Astrocyte of the cerebellum (primary cell): ENCODE measurements at regions of chr3 and their contacts with region 1.

Region 1: GRCh38 chr3:171187706-171188290 is 161.3 kb upstream of the SLC2A2 start:
- DNase-seq: no peak
- H3K4me3 ChIP-seq: no peak overlapping the region
- CTCF ChIP-seq: peak; percentile 74

Region 2: GRCh38 chr3:171223396-171223795 is 35.6 kb after region 1 on chr3:
- in situ Hi-C with region 1: loop called (anchors 5 kb)
- DNase-seq: no peak
- H3K4me3 ChIP-seq: no peak overlapping the region
- CTCF ChIP-seq: no peak

Region 3: GRCh38 chr3:171269542-171269941 is 81.7 kb after region 1 on chr3:
- in situ Hi-C with region 1: no loop called
- DNase-seq: no peak
- H3K4me3 ChIP-seq: no peak overlapping the region
- CTCF ChIP-seq: no peak